ENCODE measurements at regions of chr16 and their contacts with region 1.

Region 1: DNA sequence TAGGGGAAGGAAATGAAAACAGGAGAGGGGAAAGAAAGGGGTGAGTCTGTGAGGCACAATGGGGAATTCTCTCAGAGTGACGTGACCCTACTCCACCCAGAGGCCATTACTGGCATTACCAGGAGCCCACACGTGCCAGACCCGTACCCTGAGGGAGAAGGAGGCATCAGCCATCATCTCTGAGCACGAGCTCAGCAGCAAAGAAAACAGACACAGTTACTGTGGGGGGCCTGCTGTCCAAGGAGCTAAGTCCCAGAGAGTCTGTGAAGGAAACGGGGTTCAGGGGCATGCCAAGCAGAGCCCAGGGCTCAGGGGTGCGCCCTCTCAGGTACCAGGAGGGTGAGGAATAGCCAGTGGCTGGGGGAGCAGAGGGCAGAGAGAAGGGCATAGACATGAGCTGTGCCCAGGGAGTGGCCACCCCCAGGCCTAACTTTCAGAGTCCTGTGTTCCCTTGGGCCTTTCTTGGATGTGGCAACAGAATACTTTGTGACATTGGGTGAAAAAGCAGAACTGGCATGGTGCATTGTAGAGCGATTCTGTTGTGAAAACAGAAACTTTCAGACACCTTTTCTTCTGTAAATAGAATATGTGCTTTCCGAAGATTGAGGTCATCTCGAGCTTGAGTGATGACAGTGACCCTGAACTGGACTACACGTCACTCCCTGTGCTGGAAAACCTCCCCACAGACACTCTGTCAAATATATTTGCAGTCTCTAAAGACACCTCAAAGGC is 11.3 kb downstream of the TAF1C start:
- DNase-seq: peak; percentile 52
- H3K4me3 ChIP-seq: no peak overlapping the region
- H3K27ac ChIP-seq: no peak overlapping the region
- H3K4me1 ChIP-seq: peaks cover 18% of the 10 kb centered on the region
- H3K27me3 ChIP-seq: no peaks in the 10 kb centered on the region
- CTCF ChIP-seq: peak; percentile 32 to 61
- POLR2A ChIP-seq: no peak

Region 2: DNA sequence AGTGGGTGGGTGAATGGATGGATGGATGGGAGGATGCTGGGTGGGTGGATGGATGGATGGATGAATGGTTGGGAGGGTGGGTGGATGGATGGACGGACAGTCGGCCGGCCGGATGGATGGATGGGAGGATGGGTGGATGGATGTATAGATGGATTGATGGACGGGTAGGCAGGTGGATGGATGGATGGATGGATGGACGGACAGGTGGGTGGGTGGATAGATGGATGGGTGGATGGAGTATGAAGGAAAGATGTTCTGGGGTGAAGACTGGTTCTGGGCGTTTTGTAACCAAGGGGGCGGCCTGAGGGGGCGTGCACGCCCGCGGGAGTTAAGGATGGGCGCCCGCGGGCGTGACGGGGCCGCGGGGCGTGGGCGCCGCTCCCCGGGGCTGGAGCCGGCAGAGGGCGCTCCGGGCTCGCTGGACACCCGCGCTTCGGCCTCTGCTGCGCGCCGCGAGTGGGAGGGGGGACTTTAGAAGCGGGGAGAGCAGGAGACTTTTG is 207.7 kb before region 1 on chr16 and contains the start of gene NECAB2:
- CTCF ChIA-PET with region 1: no interaction called
- POLR2A ChIA-PET with region 1: no interaction called
- dilution Hi-C with region 1: no loop called
- intact Hi-C with region 1: loop called (anchors 5 kb)
- DNase-seq: peak; percentile 14
- H3K4me3 ChIP-seq: peak within 1 kb of the TSS in 1 of 3 experiments; percentile 23
- H3K27ac ChIP-seq: no peak within 1 kb of the TSS
- H3K4me1 ChIP-seq: no peaks in the 10 kb centered on the region
- H3K27me3 ChIP-seq: peaks cover 5 to 8% of the 10 kb centered on the region in 2 experiments
- CTCF ChIP-seq: peak; percentile 48 to 64
- POLR2A ChIP-seq: no peak
- total RNA-seq, gene NECAB2: 0.31 TPM in 1 of 2 replicates, not detected in the other

Region 3: GRCh38 chr16:84052071-84052635 is 123.4 kb before region 1 on chr16:
- CTCF ChIA-PET with region 1: no interaction called
- POLR2A ChIA-PET with region 1: no interaction called
- dilution Hi-C with region 1: no loop called
- intact Hi-C with region 1: no loop called
- DNase-seq: no peak
- H3K4me3 ChIP-seq: no peak overlapping the region
- H3K27ac ChIP-seq: no peak overlapping the region
- H3K4me1 ChIP-seq: no peaks in the 10 kb centered on the region
- H3K27me3 ChIP-seq: no peaks in the 10 kb centered on the region
- CTCF ChIP-seq: no peak
- POLR2A ChIP-seq: no peak

Region 4: DNA sequence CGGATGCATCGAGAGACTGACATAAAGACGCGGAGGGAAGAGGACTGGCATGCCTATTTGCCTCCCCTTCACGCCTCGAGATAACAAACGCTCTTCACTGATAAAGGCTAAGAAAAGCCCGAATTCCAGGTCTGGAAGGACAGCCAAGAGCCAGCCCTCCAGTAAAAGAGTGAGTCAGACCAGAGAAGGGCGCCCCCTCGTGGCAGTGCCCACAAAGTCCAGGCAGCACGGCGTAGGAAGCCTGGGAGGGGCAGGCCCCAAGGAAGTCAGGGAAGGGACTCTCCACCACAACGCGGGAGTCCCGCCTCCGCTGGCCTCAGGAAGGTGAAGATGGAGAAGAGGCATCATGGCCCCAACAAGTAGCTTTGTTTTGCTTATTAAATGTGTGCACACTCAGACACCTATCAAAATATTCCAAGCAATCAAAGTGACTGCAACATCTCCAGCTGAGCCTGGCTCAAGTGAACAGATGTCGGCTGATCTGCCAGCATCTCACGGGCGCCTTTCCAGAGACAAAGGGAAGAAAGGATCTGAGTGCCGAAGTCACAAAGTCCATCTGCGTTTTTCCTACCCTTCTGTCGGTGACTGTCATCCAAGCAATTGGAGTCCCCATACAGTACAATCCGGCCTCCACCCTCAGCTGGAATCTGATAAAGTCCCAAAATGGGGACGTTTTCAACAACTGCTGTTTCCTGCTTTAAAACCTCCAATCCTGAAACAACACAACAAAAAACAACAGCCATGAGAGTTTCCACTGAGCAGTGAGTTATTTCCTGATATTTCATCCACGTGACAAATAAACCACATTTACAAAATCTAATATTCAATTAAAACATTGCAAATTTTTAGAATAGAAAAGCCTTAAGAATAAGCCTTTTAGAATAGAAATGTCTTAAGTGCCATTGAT is 112.5 kb before region 1 on chr16:
- CTCF ChIA-PET with region 1: no interaction called
- POLR2A ChIA-PET with region 1: no interaction called
- dilution Hi-C with region 1: no loop called
- intact Hi-C with region 1: loop called (anchors 1 kb)
- DNase-seq: peak; percentile 73
- H3K4me3 ChIP-seq: no peak overlapping the region
- H3K27ac ChIP-seq: peak overlapping the region; percentile 1
- H3K4me1 ChIP-seq: peaks cover 7% of the 10 kb centered on the region
- H3K27me3 ChIP-seq: no peaks in the 10 kb centered on the region
- CTCF ChIP-seq: peak; percentile 93
- POLR2A ChIP-seq: no peak

Region 5: GRCh38 chr16:84084570-84085270 is 90.8 kb before region 1 on chr16:
- CTCF ChIA-PET with region 1: interaction called, 8 read pairs
- POLR2A ChIA-PET with region 1: no interaction called
- dilution Hi-C with region 1: no loop called
- intact Hi-C with region 1: loop called (anchors 1 kb)
- DNase-seq: peak; percentile 66
- H3K4me3 ChIP-seq: no peak overlapping the region
- H3K27ac ChIP-seq: no peak overlapping the region
- H3K4me1 ChIP-seq: no peaks in the 10 kb centered on the region
- H3K27me3 ChIP-seq: no peaks in the 10 kb centered on the region
- CTCF ChIP-seq: peak; percentile 71 to 87
- POLR2A ChIP-seq: no peak

Region 6: DNA sequence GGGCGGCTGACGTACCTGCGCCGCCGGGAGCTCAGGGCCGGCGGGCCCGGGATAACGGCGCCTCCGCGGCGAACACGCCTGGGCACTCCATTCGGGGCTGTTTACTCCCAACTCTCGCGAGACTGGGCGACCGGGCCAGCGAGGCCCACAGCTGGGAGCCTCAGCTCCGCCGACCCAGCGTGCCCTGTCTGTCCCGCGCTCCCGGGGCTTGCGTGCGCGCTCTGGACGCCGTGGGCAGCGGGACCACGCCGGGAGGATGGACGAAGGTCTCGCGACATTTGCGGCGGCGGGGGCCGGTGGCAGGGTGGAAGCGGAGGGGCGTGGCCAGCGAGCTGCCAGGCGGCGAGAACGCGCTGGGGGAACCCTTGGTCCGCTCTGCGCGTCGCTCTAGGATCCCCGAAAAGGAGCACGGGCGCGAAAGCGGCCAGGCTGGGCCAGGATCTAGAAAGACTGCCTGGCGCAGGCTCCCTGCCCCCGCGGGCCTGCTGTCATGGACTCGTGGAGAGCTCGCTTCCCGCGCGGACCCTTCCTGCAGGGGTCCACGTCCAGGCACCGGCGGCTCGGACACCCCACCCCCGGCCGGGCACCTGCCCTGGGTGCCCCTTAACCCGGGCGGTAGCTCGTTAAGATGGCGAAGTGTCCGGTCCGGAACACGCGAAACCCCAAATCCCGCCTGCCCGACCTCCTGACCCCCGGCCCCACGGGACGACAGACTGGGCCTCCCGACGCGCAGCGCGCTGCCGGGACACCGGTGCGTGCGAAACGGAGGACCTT is 58.6 kb before region 1 on chr16 and contains the start of gene MBTPS1:
- CTCF ChIA-PET with region 1: interaction called, 3 read pairs
- POLR2A ChIA-PET with region 1: interaction called, 3 read pairs
- dilution Hi-C with region 1: no loop called
- intact Hi-C with region 1: loop called (anchors 1 kb)
- DNase-seq: peak; percentile 98
- H3K4me3 ChIP-seq: peak within 1 kb of the TSS; percentile 70 to 96 (median 88)
- H3K27ac ChIP-seq: peak within 1 kb of the TSS; percentile 69
- H3K4me1 ChIP-seq: peaks cover 10% of the 10 kb centered on the region
- H3K27me3 ChIP-seq: no peaks in the 10 kb centered on the region
- CTCF ChIP-seq: no peak
- POLR2A ChIP-seq: peak; percentile 69
- total RNA-seq, gene MBTPS1: 93.0 and 99.6 TPM in 2 replicates

Region 7: GRCh38 chr16:84144859-84145639 is 30.5 kb before region 1 on chr16 and contains the starts of genes DNAAF1 and HSDL1:
- CTCF ChIA-PET with region 1: no interaction called
- POLR2A ChIA-PET with region 1: no interaction called
- dilution Hi-C with region 1: no loop called
- intact Hi-C with region 1: loop called (anchors 1 kb)
- DNase-seq: peak; percentile 88
- H3K4me3 ChIP-seq: peak within 1 kb of the TSS; percentile 65 to 91 (median 85)
- H3K27ac ChIP-seq: peak within 1 kb of the TSS; percentile 34
- H3K4me1 ChIP-seq: peaks cover 5% of the 10 kb centered on the region
- H3K27me3 ChIP-seq: peaks cover 0 to 4% of the 10 kb centered on the region in 2 experiments
- CTCF ChIP-seq: no peak
- POLR2A ChIP-seq: no peak
- total RNA-seq, gene DNAAF1: not detected in 2 replicates
- total RNA-seq, gene HSDL1: 26.1 and 27.9 TPM in 2 replicates

Region 8: GRCh38 chr16:84194470-84195200 is 19.1 kb after region 1 on chr16:
- CTCF ChIA-PET with region 1: no interaction called
- POLR2A ChIA-PET with region 1: no interaction called
- dilution Hi-C with region 1: no loop called
- intact Hi-C with region 1: no loop called
- DNase-seq: no peak
- H3K4me3 ChIP-seq: no peak overlapping the region
- H3K27ac ChIP-seq: no peak overlapping the region
- H3K4me1 ChIP-seq: no peaks in the 10 kb centered on the region
- H3K27me3 ChIP-seq: no peaks in the 10 kb centered on the region
- CTCF ChIP-seq: no peak
- POLR2A ChIP-seq: no peak

Measured in endothelial cell of umbilical vein (primary cell).